CD8-positive, alpha-beta memory T cell (primary cell): ENCODE measurements at regions of chr3 and their contacts with region 1.

Region 1: GRCh38 chr3:141738022-141738890 is at the start of gene RNF7:
- DNase-seq: peak; percentile 96 to 98 (median 97)
- H3K4me3 ChIP-seq: peak within 1 kb of the TSS; percentile 91
- H3K4me3 Mint-ChIP-seq: peak within 1 kb of the TSS; percentile 95 to 100 (median 98)
- H3K27ac ChIP-seq: peak within 1 kb of the TSS; percentile 88
- H3K27ac Mint-ChIP-seq: peak within 1 kb of the TSS; percentile 95 to 100 (median 100)
- H3K4me1 ChIP-seq: peaks cover 28% of the 10 kb centered on the region
- H3K4me1 Mint-ChIP-seq: peaks cover 40 to 57% (median 56%) of the 10 kb centered on the region in 3 donors
- H3K27me3 ChIP-seq: no peaks in the 10 kb centered on the region
- H3K27me3 Mint-ChIP-seq: no peaks in the 10 kb centered on the region
- total RNA-seq, gene RNF7: 65.9 to 67.4 TPM

Region 2: GRCh38 chr3:141544697-141545096 is 193.6 kb before region 1 on chr3:
- CTCF ChIA-PET with region 1: no interaction called
- POLR2A ChIA-PET with region 1: interaction called, 10 read pairs
- DNase-seq: peak in 2 of 5 donors; percentile 41 to 44
- H3K4me3 ChIP-seq: peak overlapping the region; percentile 23
- H3K4me3 Mint-ChIP-seq: peak overlapping the region in 6 of 7 donors; percentile 60 to 89 (median 64)
- H3K27ac ChIP-seq: no peak overlapping the region
- H3K27ac Mint-ChIP-seq: peak overlapping the region; percentile 66 to 99 (median 84)
- H3K4me1 ChIP-seq: peaks cover 28% of the 10 kb centered on the region
- H3K4me1 Mint-ChIP-seq: peaks cover 74 to 92% (median 85%) of the 10 kb centered on the region in 3 donors
- H3K27me3 ChIP-seq: no peaks in the 10 kb centered on the region
- H3K27me3 Mint-ChIP-seq: no peaks in the 10 kb centered on the region

Region 3: DNA sequence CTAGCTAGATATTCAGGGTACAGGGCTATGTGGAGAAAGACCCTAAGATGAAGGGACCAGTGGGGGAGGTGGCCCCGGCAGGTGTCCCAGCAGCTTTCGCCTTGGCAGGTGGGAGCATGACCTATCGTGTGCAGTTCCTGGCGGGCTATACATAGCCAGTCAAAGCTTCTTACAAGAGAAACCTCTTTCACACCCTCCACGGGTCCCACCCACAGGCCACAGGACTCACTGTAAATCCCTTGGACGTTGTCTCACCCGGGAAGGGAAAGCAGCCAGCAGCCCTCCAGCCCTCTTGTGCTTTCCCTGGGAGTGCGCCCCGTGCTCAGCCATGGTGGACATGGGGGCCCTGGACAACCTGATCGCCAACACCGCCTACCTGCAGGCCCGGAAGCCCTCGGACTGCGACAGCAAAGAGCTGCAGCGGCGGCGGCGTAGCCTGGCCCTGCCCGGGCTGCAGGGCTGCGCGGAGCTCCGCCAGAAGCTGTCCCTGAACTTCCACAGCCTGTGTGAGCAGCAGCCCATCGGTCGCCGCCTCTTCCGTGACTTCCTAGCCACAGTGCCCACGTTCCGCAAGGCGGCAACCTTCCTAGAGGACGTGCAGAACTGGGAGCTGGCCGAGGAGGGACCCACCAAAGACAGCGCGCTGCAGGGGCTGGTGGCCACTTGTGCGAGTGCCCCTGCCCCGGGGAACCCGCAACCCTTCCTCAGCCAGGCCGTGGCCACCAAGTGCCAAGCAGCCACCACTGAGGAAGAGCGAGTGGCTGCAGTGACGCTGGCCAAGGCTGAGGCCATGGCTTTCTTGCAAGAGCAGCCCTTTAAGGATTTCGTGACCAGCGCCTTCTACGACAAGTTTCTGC is 39.9 kb after region 1 on chr3:
- CTCF ChIA-PET with region 1: no interaction called
- POLR2A ChIA-PET with region 1: no interaction called
- DNase-seq: no peak
- H3K4me3 ChIP-seq: no peak overlapping the region
- H3K4me3 Mint-ChIP-seq: no peak overlapping the region
- H3K27ac ChIP-seq: no peak overlapping the region
- H3K27ac Mint-ChIP-seq: no peak overlapping the region
- H3K4me1 ChIP-seq: no peaks in the 10 kb centered on the region
- H3K4me1 Mint-ChIP-seq: no peaks in the 10 kb centered on the region
- H3K27me3 ChIP-seq: no peaks in the 10 kb centered on the region
- H3K27me3 Mint-ChIP-seq: peaks cover 3% of the 10 kb centered on the region in 2 donors

Region 4: DNA sequence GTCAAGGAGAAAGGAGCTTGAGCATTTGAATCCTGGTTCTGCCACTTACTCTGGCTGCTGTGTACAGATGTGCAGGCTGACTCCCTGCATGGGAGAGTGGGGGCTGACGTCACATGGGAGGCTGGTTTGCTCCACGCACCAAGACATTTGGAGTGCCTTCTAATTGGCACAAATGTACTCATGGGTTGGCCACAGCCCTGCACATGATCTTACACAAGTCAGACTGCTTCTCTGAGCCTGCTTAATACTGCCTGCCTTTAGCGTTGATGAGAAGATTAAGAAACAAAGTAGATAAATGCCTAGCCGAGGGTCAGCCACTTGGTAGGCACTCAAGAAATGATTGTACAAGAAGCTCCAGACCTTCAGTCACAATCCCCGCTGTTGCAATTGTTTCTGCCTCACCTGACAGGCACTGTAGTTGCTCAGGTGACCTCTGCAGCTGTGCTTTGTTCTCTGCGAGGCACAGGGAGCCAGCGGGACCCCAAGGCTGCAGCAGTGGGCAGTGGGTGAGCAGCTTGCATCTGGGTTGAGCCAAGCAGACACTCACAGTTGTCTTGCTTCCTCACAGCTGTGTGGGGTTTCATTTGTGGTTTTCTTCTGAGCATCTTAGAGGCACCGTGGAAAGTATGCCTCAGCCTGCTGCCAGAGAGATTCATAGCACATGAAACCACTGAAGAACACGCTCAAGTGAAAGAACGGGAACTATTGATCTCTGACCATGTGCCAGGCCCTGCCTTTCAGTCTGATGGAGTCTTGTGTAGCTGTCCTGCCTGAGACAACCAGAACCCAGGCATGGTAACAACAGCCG is 58.0 kb after region 1 on chr3:
- CTCF ChIA-PET with region 1: interaction called, 12 read pairs
- POLR2A ChIA-PET with region 1: interaction called, 20 read pairs
- DNase-seq: peak; percentile 34 to 84 (median 57)
- H3K4me3 ChIP-seq: peak overlapping the region; percentile 71
- H3K4me3 Mint-ChIP-seq: peak overlapping the region; percentile 87 to 96 (median 91)
- H3K27ac ChIP-seq: peak overlapping the region; percentile 69
- H3K27ac Mint-ChIP-seq: peak overlapping the region; percentile 86 to 99 (median 98)
- H3K4me1 ChIP-seq: peaks cover 54% of the 10 kb centered on the region
- H3K4me1 Mint-ChIP-seq: peaks cover 57 to 61% (median 59%) of the 10 kb centered on the region in 3 donors
- H3K27me3 ChIP-seq: no peaks in the 10 kb centered on the region
- H3K27me3 Mint-ChIP-seq: no peaks in the 10 kb centered on the region

Region 5: DNA sequence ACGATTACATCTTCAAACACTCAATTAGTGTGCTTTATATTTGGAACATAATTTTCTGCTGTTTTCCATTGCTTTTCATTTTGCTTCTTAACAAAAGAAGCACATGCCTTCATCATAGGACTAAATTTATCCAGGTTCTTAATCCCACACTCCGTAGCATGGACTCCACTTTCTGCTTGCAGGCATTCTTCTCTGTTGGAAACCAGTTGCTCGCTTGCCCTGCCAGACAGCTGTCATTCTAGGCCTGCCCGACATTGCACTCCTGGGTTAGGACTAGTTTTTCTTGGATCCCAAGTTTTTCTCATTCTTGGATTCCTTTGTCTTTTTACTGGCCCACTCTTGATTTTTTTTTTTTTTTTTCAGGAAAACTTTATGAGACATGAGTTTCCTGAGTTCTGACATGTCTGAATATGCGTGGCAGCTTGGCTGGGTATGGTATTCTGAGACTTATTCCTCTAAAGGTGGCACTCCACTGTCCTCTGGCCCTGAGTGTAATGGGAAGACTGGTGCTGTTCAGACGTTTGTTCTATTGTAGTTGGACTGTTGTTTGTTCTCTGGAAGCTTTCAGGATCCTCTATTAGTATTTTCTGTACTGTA is 131.9 kb after region 1 on chr3:
- CTCF ChIA-PET with region 1: interaction called, 28 read pairs
- POLR2A ChIA-PET with region 1: interaction called, 36 read pairs
- DNase-seq: no peak
- H3K4me3 ChIP-seq: no peak overlapping the region
- H3K4me3 Mint-ChIP-seq: no peak overlapping the region
- H3K27ac ChIP-seq: no peak overlapping the region
- H3K27ac Mint-ChIP-seq: no peak overlapping the region
- H3K4me1 ChIP-seq: peaks cover 3% of the 10 kb centered on the region
- H3K4me1 Mint-ChIP-seq: peaks cover 1 to 6% (median 3%) of the 10 kb centered on the region in 3 donors
- H3K27me3 ChIP-seq: no peaks in the 10 kb centered on the region
- H3K27me3 Mint-ChIP-seq: no peaks in the 10 kb centered on the region

Region 6: GRCh38 chr3:141875374-141875892 is 137.2 kb after region 1 on chr3:
- CTCF ChIA-PET with region 1: interaction called, 28 read pairs
- POLR2A ChIA-PET with region 1: interaction called, 36 read pairs
- DNase-seq: peak; percentile 74 to 87 (median 76)
- H3K4me3 ChIP-seq: peak overlapping the region; percentile 87
- H3K4me3 Mint-ChIP-seq: peak overlapping the region; percentile 86 to 99 (median 91)
- H3K27ac ChIP-seq: peak overlapping the region; percentile 85
- H3K27ac Mint-ChIP-seq: peak overlapping the region; percentile 86 to 99 (median 96)
- H3K4me1 ChIP-seq: peaks cover 24% of the 10 kb centered on the region
- H3K4me1 Mint-ChIP-seq: peaks cover 30 to 41% (median 40%) of the 10 kb centered on the region in 3 donors
- H3K27me3 ChIP-seq: no peaks in the 10 kb centered on the region
- H3K27me3 Mint-ChIP-seq: peaks cover 0 to 2% of the 10 kb centered on the region in 2 donors

Region 7: DNA sequence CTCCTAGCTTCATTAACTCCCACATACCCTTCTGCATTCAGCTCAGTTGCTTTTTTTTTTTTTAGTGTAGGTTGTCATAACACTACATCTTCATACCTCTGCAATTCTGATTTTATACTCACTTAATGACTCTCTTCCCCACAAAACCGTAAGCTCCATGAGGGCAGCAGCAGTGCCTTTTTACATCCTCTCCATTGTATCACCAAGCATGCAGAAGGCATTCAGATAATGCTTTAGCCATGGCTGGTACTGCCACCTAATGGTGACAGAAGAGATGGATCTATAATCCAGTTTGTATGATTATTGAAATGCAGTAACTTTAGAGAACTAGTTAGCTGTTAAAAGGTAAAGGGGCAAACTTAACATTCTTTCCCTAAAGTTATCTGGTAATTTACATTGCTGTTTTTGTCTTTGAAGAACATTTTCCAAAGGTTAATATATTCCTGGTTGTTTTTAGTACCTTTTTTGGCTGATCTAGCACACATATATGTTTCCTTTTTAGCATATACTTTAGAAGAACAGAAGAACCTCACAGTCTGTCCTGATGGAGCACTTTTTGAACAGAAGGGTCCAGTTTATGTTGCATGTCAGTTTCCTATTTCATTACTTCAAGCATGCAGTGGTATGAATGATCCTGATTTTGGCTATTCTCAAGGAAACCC is 175.0 kb after region 1 on chr3:
- CTCF ChIA-PET with region 1: interaction called, 12 read pairs
- POLR2A ChIA-PET with region 1: interaction called, 6 read pairs
- DNase-seq: peak; percentile 14 to 61 (median 43)
- H3K4me3 ChIP-seq: no peak overlapping the region
- H3K4me3 Mint-ChIP-seq: no peak overlapping the region
- H3K27ac ChIP-seq: no peak overlapping the region
- H3K27ac Mint-ChIP-seq: peak overlapping the region in 6 of 8 donors; percentile 0 to 75 (median 38)
- H3K4me1 ChIP-seq: no peaks in the 10 kb centered on the region
- H3K4me1 Mint-ChIP-seq: peaks cover 0 to 4% (median 2%) of the 10 kb centered on the region in 3 donors
- H3K27me3 ChIP-seq: no peaks in the 10 kb centered on the region
- H3K27me3 Mint-ChIP-seq: no peaks in the 10 kb centered on the region

Region 8: GRCh38 chr3:142098964-142099363 is 360.7 kb after region 1 on chr3:
- CTCF ChIA-PET with region 1: no interaction called
- POLR2A ChIA-PET with region 1: no interaction called
- DNase-seq: no peak
- H3K4me3 ChIP-seq: no peak overlapping the region
- H3K4me3 Mint-ChIP-seq: no peak overlapping the region
- H3K27ac ChIP-seq: no peak overlapping the region
- H3K27ac Mint-ChIP-seq: no peak overlapping the region
- H3K4me1 ChIP-seq: no peaks in the 10 kb centered on the region
- H3K4me1 Mint-ChIP-seq: peaks cover 5 to 7% (median 6%) of the 10 kb centered on the region in 3 donors
- H3K27me3 ChIP-seq: no peaks in the 10 kb centered on the region
- H3K27me3 Mint-ChIP-seq: no peaks in the 10 kb centered on the region